Activated CD8-positive, alpha-beta T cell treated with anti-CD3 and anti-CD28 coated beads for 36 hours (primary cell): ENCODE measurements at regions of chr3 and their contacts with region 1.

Region 1: GRCh38 chr3:124559881-124560574 is 170.2 kb upstream of the UMPS start:
- DNase-seq: peak; percentile 76
- ATAC-seq: peak; percentile 61
- H3K4me3 Mint-ChIP-seq: no peak overlapping the region
- H3K27ac Mint-ChIP-seq: no peak overlapping the region
- H3K4me1 Mint-ChIP-seq: no peaks in the 10 kb centered on the region
- H3K27me3 Mint-ChIP-seq: peaks cover 24% of the 10 kb centered on the region
- CTCF ChIP-seq: peak; percentile 71

Region 2: GRCh38 chr3:124529826-124530571 is 30.0 kb before region 1 on chr3:
- CTCF ChIA-PET with region 1: interaction called, 11 read pairs
- POLR2A ChIA-PET with region 1: no interaction called
- intact Hi-C with region 1: no loop called
- DNase-seq: no peak
- ATAC-seq: no peak
- H3K4me3 Mint-ChIP-seq: no peak overlapping the region
- H3K27ac Mint-ChIP-seq: no peak overlapping the region
- H3K4me1 Mint-ChIP-seq: no peaks in the 10 kb centered on the region
- H3K27me3 Mint-ChIP-seq: peaks cover 10% of the 10 kb centered on the region
- CTCF ChIP-seq: no peak

Region 3: DNA sequence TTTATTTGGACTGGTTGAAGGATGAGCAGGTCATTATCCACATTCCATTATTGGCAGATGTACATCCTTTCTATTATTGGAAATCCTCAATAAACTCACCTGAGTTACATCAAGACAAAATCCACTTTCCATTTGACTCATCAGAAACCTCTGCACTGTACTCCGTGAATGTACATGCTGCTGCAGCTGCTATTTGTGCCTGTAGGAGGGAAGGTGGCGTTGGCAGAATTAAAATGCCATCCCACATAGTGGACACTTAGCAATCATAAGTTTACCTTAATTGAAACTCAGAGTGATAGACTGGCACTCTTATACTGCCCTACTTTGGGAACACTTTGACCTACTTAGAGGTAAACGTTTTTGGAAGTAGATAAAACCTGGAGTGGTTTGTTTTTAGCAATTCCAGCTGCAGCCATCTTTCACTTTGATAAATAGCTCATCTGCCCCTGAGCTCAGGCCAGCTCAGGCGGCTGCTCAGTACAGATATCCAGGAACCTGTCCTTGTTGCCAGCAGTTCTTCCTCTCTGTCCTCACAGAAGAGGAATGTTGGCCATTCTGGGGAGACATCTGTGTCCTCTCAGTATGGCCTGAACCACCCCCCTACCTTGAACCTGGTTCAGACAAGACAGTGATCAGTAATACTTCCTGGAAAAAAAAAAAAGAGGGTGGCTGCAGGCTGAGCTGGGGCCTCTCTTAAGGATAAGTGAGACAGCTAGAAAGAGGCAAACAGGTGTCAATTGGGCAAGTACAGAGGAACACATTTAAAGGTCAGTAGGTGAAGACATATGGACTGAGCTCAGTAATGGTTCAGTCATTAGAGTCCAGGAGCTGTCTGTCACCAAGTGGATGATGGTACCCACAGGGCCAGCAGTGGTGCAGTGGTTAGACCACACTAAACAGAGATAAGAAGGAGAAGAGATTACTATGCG is 16.8 kb after region 1 on chr3:
- CTCF ChIA-PET with region 1: interaction called, 31 read pairs
- POLR2A ChIA-PET with region 1: no interaction called
- intact Hi-C with region 1: no loop called
- DNase-seq: no peak
- ATAC-seq: no peak
- H3K4me3 Mint-ChIP-seq: no peak overlapping the region
- H3K27ac Mint-ChIP-seq: no peak overlapping the region
- H3K4me1 Mint-ChIP-seq: no peaks in the 10 kb centered on the region
- H3K27me3 Mint-ChIP-seq: peaks cover 11% of the 10 kb centered on the region
- CTCF ChIP-seq: no peak